Activated CD4-positive, alpha-beta memory T cell treated with anti-CD3 and anti-CD28 coated beads, Interleukin-2, amount 10 ng/mL, durations not matched to agents 7 days and 5 days (primary cell): ENCODE measurements at regions of chr19 and their contacts with region 1.

Region 1: DNA sequence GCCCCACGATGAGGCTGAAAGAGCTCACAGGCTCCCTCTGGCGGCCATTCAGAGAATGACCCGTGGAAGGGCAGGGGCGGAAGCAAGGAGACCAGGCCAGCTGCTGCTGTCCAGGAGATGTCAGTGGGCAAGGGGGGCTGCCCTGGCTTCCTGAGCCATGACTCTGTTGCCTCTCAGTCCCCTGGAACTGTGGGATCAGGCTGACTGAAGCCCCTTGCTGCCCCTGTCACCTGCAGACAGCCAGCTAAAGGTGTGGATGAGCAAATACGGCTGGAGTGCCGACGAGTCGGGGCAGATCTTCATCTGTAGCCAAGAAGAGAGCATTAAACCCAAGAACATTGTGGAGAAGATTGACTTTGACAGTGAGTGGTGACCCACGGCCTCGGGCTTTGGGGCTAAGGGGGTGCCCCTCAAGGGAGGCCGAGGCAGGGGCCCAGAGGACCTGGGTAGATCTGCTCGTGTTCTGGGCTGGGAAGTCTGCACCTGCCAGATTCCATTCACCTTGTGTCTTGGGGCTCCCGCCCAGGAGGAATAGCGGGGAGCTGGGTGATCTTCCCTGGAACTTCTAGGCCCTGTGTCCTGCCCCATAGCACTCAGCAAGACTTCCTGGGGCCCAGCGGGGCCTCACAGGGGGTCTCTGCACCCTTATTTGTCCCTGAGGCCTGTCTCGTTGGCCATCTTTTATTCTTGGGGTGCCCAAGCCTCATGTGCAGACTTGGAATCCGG is 12.5 kb upstream of the ACTN4 start:
- DNase-seq: peak; percentile 81
- H3K4me3 Mint-ChIP-seq: no peak overlapping the region
- H3K27ac Mint-ChIP-seq: peak overlapping the region; percentile 87
- H3K4me1 Mint-ChIP-seq: peaks cover 50% of the 10 kb centered on the region
- H3K27me3 Mint-ChIP-seq: no peaks in the 10 kb centered on the region

Region 2: DNA sequence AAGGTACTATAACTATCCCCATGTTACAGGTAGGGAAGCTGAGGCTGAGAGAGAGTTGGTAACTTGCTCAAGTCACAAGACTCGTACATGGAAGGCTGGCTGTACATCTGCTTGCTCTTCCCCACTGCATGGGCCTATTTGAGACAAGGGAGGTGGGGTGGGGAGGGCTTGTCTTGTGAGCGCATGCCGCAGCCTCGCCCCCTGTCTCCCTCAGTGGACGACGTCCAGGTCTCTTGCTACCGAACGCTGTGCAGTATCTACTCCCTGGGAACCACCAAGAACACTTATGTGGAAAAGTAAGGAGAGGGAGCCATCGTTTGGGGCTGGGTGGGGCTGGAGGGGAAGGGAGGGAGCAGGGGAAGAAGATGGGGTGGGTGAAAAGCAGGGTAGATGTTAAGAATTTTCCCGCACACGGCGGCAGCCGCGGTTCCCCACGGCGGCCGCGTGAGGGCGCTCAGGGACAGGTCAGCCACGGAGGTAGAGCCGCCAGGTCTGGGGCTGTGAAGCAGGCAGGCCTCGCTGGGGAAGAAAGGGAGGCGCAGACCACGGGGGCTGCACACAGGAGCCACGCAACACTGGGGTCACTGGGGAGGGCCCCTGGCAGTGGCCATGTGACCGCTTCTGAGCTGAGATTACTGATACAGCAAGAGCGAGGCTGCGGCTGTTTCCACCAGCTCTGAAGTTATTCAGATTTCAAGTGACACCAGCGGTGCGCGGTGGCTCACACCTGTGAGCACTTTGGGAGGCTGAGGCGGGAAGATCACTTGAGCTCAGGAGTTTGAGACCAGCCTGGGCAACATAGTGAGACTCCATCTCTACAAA is 119.9 kb before region 1 on chr19:
- CTCF ChIA-PET with region 1: interaction called, 54 read pairs
- POLR2A ChIA-PET with region 1: interaction called, 3 read pairs
- DNase-seq: peak; percentile 80
- H3K4me3 Mint-ChIP-seq: no peak overlapping the region
- H3K27ac Mint-ChIP-seq: peak overlapping the region; percentile 31
- H3K4me1 Mint-ChIP-seq: peaks cover 31% of the 10 kb centered on the region
- H3K27me3 Mint-ChIP-seq: peaks cover 4% of the 10 kb centered on the region

Region 3: GRCh38 chr19:38736413-38737280 is 101.7 kb after region 1 on chr19:
- CTCF ChIA-PET with region 1: no interaction called
- POLR2A ChIA-PET with region 1: no interaction called
- DNase-seq: peak; percentile 70
- H3K4me3 Mint-ChIP-seq: peak overlapping the region; percentile 63
- H3K27ac Mint-ChIP-seq: no peak overlapping the region
- H3K4me1 Mint-ChIP-seq: peaks cover 62% of the 10 kb centered on the region
- H3K27me3 Mint-ChIP-seq: peaks cover 4% of the 10 kb centered on the region